Right ventricle myocardium inferior (tissue), 1 donor: ENCODE measurements at regions of chr9 and their contacts with region 1.

Region 1: DNA sequence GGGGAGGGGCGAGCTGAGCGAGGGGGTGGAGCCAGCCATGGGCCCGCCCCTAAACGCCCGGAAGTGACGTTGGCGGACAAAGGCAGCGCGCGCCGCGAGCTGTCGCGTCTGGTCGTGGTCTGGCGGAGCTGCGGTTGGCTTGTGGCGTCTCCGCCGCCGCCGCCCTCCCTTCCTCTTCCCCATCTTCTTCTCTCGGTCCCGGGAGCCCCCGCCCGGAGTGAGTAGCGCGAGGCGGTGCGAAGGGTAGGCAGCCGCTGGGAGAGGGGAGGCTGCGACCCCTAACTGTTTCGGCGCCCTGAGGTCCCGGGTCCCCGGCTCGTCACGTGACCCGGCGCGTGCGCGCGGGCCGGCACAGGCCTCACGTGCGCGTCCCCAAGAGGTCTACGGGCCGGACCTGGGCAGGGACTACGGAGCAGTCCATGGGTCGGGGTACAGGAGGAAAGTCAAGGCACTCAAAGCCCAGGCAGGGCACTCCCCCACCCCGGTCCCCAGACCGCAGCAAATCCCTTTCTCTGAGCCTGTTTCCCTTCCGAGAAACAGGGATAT is at the start of gene NTMT1:
- DNase-seq: peak; percentile 96
- ATAC-seq: peak; percentile 93
- total RNA-seq, gene NTMT1: 72.1 TPM

Region 2: DNA sequence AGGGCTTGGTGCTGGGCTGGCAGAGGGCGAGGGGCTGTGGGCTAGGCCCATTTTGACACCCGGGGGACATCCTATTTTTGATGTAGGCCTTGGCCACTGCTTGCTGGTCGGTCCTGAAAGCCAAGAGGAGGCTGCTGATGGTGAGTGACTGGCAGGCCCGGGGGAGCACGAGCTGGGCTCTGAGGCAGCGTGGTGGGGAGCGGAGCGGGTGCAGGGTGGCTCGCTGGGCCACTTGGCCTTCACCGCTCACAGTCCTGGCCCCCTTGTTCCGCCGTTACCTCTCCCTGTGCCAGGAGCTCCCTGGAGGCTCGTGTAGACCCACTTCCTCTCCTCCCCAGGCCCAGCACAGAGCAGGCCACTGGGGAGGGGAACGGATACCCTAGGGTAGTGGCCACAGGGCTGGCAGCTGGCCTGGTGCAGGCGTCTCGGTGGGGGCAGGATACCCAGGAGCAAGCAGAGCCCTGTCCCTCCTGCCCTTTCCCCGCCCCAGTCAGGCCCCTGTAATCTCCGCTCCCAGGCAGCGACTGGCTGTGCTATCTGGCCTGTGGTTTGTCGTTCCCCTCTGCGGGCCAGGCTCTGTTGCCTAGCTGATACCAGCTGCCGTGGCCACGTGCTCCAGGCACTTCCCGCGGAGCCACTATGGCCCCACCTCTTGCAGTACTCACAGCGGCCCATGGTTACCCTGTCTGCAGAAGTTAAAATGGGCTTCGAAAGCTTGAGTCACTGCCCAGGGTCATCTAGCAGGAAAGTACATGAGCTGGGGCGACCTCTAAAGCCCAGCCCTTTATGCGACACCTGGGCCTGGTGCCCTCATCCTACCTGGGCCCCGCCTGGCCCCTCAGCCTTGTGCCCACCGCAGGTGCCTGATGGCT is 556.9 kb before region 1 on chr9:
- intact Hi-C with region 1: no loop called
- DNase-seq: peak; percentile 89
- ATAC-seq: peak; percentile 94

Region 3: GRCh38 chr9:129139993-129140396 is 486.2 kb before region 1 on chr9:
- intact Hi-C with region 1: loop called (anchors 5 kb)
- DNase-seq: peak; percentile 93
- ATAC-seq: peak; percentile 84